ENCODE measurements at regions of chr13 and their contacts with region 1.

Region 1: DNA sequence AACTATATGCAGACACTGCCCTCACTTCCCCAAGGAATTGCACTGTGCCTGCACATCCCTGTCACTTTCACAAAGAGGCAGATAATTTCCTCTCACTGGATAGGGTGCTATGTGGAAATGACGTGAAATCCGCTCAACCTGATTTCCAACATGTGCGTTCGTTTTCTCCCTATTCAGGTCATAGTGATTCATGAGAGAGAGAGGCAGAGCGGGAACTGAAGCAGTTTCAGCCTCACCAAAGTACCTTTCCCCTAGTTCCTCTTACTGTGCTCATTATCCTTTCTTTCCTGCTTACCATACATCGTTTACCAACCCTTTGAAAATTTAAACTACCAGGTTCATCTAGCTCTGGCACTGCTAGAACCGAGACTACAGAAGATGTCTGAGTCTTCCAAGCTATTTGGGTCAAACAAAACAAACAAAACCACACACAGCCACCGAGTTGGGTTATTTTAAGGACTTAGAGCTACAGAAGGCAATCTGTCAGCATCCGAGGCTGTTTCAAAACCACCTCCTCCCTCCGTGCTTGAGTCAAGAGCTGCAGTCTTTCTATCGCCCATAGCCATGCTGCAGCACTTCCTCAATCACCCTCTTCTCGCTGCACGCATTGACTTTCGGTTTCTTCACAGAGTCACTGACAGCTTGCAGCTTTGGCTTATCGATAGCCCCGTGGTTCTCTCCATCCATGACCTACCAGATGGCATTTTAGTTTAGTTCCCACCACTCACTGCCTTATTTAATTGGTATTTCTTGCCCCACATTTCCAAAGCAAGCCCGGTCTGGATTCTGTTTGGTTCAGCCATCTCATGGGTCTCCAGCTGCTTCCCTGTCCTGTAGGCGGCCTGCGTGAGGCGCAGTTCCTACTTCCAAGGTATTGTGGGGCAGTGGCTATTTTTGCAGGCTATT is 1395.8 kb downstream of the EFNB2 start:
- DNase-seq: peak; percentile 62
- ATAC-seq: peak; percentile 93
- H3K4me3 ChIP-seq: peak overlapping the region; percentile 91
- H3K27ac ChIP-seq: peak overlapping the region; percentile 68; the same call in 1 of the 2 replicates
- H3K4me1 ChIP-seq: no peaks in the 10 kb centered on the region
- H3K27me3 ChIP-seq: no peaks in the 10 kb centered on the region
- CTCF ChIP-seq: peak; percentile 24; the same call in 1 of the 2 replicates
- POLR2A ChIP-seq: no peak
- RAD21 ChIP-seq: no peak

Region 2: GRCh38 chr13:106520205-106521054 is 1380.8 kb after region 1 on chr13:
- CTCF ChIA-PET with region 1: no interaction called
- POLR2A ChIA-PET with region 1: no interaction called
- dilution Hi-C with region 1: no loop called
- in situ Hi-C with region 1: no loop called
- intact Hi-C with region 1: loop called (anchors 2 kb)
- DNase-seq: peak; percentile 56
- ATAC-seq: peak; percentile 75
- H3K4me3 ChIP-seq: no peak overlapping the region
- H3K27ac ChIP-seq: peak overlapping the region; percentile 22; the same call in 1 of the 2 replicates
- H3K4me1 ChIP-seq: peaks cover 6% of the 10 kb centered on the region
- H3K27me3 ChIP-seq: no peaks in the 10 kb centered on the region
- CTCF ChIP-seq: peak; percentile 73
- POLR2A ChIP-seq: no peak
- RAD21 ChIP-seq: peak; percentile 72

Measured in IMR-90 (cell line).